CD8-positive, alpha-beta T cell (primary cell): ENCODE measurements at regions of chr7 and their contacts with region 1.

Region 1: DNA sequence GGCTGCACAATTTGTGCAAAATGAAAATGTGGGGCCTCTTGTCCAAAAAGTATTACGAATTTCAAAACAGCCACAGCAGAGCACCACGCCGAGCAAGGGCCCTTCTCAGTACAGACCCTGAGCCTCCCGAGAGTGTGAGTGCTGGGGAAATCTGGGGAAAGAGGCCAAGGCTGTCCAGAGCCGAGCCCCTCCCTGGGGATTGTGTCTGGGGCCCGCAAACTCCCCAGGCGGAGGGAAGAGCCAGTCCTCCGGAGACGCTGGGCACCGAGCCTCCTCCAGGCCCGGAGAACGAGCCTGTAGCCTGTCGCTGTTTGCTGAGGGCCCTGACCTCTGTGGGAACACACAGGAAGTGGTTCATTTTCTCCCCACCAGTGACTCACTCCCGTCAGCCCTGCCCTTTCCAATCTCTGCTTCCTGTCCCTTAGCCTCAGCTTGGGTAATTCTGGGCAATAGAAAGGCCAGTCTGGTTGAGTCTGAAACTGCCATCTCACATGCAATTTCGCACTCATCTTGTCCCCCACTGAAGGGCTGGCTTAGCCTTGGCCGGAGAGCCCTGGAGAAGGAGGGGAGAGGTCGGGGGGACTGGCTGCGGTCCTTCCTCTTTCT is 19.5 kb upstream of the GNA12 start:
- DNase-seq: peak; percentile 21 to 89 (median 66)
- ATAC-seq: peak; percentile 74
- H3K4me3 ChIP-seq: peak overlapping the region in 1 of 2 experiments; percentile 32
- H3K4me3 Mint-ChIP-seq: peak overlapping the region; percentile 64
- H3K27ac ChIP-seq: peak overlapping the region in 1 of 2 experiments; percentile 70
- H3K27ac Mint-ChIP-seq: peak overlapping the region; percentile 96
- H3K4me1 ChIP-seq: peaks cover 26% of the 10 kb centered on the region
- H3K4me1 Mint-ChIP-seq: peaks cover 27% of the 10 kb centered on the region
- H3K27me3 ChIP-seq: peaks cover 0 to 3% of the 10 kb centered on the region in 2 experiments
- H3K27me3 Mint-ChIP-seq: no peaks in the 10 kb centered on the region
- CTCF ChIP-seq: no peak

Region 2: GRCh38 chr7:2850066-2850825 is 13.3 kb before region 1 on chr7:
- CTCF ChIA-PET with region 1: interaction called, 17 read pairs
- POLR2A ChIA-PET with region 1: no interaction called
- intact Hi-C with region 1: loop called in 1 of 2 experiments (anchors 2 kb)
- DNase-seq: peak in 2 of 9 experiments; percentile 20 to 46
- ATAC-seq: no peak
- H3K4me3 ChIP-seq: no peak overlapping the region
- H3K4me3 Mint-ChIP-seq: no peak overlapping the region
- H3K27ac ChIP-seq: no peak overlapping the region
- H3K27ac Mint-ChIP-seq: no peak overlapping the region
- H3K4me1 ChIP-seq: peaks cover 7% of the 10 kb centered on the region
- H3K4me1 Mint-ChIP-seq: peaks cover 10% of the 10 kb centered on the region
- H3K27me3 ChIP-seq: no peaks in the 10 kb centered on the region
- H3K27me3 Mint-ChIP-seq: no peaks in the 10 kb centered on the region
- CTCF ChIP-seq: no peak

Region 3: DNA sequence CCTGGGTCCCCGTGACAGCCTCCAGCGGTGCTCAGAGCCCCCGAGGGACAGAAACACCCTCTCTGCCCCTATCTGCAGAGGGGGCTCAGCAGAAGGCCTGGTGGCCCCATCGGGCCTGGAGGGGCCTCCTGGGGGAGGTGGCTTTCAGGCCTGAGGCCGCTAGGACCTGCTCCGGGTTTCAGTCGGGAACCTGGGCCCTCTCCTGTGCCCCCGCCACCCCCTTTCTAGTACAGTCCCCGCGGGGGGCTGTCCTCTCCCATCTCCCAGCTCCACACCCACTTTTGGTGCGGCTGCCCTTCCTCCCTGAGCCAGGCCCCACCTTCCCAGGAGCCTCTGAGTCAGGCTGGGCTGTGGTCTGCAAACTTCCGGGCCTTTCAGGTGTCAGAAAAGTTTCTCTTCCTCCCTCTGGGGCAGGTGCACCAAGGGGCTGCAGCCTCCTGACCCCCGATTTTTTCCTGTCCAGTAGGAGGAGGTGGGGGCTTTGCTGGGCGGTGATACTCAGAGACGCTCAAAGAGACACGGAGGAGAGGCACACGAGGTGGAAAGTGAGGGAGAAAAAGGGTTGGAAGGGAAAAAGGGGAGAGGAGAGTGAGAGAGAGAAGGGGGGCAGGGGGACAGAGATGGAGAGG is 179.4 kb after region 1 on chr7:
- CTCF ChIA-PET with region 1: no interaction called
- POLR2A ChIA-PET with region 1: no interaction called
- intact Hi-C with region 1: loop called in 1 of 2 experiments (anchors 5 kb)
- DNase-seq: peak; percentile 20 to 82 (median 73)
- ATAC-seq: peak; percentile 61
- H3K4me3 ChIP-seq: peak overlapping the region; percentile 84 to 96
- H3K4me3 Mint-ChIP-seq: peak overlapping the region; percentile 92
- H3K27ac ChIP-seq: peak overlapping the region; percentile 84 to 88
- H3K27ac Mint-ChIP-seq: peak overlapping the region; percentile 94
- H3K4me1 ChIP-seq: peaks cover 49% of the 10 kb centered on the region
- H3K4me1 Mint-ChIP-seq: peaks cover 59% of the 10 kb centered on the region
- H3K27me3 ChIP-seq: no peaks in the 10 kb centered on the region
- H3K27me3 Mint-ChIP-seq: no peaks in the 10 kb centered on the region
- CTCF ChIP-seq: no peak

Region 4: GRCh38 chr7:3154912-3155494 is 291.4 kb after region 1 on chr7:
- CTCF ChIA-PET with region 1: interaction called, 50 read pairs
- POLR2A ChIA-PET with region 1: no interaction called
- intact Hi-C with region 1: loop called (anchors 1 kb)
- DNase-seq: peak; percentile 27 to 79 (median 66)
- ATAC-seq: peak; percentile 89
- H3K4me3 ChIP-seq: no peak overlapping the region
- H3K4me3 Mint-ChIP-seq: no peak overlapping the region
- H3K27ac ChIP-seq: no peak overlapping the region
- H3K27ac Mint-ChIP-seq: no peak overlapping the region
- H3K4me1 ChIP-seq: peaks cover 12% of the 10 kb centered on the region
- H3K4me1 Mint-ChIP-seq: peaks cover 13% of the 10 kb centered on the region
- H3K27me3 ChIP-seq: no peaks in the 10 kb centered on the region
- H3K27me3 Mint-ChIP-seq: no peaks in the 10 kb centered on the region
- CTCF ChIP-seq: peak; percentile 89

Region 5: DNA sequence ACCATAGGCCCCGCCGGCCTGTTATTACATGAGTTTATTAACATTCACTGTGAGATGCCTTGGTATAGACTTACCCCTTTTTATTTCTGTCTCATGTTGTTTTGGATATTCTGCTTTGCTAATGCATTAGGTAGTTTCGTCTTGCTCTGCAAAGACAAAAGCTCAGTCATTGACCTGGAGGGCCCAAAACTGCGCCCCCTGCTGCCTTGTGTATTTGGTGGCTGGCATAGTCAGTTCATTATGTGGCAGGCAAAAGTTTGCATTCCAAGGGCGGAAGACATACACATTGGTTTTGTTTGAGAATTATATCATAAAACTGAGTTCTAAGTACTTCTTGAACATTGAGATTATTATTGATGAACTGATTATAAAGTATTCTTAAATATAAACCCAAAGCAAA is 810.0 kb after region 1 on chr7:
- CTCF ChIA-PET with region 1: interaction called, 10 read pairs
- POLR2A ChIA-PET with region 1: no interaction called
- intact Hi-C with region 1: loop called in 1 of 2 experiments (anchors 5 kb)
- DNase-seq: peak in 8 of 9 experiments; percentile 21 to 66 (median 52)
- ATAC-seq: no peak
- H3K4me3 ChIP-seq: no peak overlapping the region
- H3K4me3 Mint-ChIP-seq: no peak overlapping the region
- H3K27ac ChIP-seq: no peak overlapping the region
- H3K27ac Mint-ChIP-seq: no peak overlapping the region
- H3K4me1 ChIP-seq: peaks cover 15% of the 10 kb centered on the region
- H3K4me1 Mint-ChIP-seq: peaks cover 2% of the 10 kb centered on the region
- H3K27me3 ChIP-seq: no peaks in the 10 kb centered on the region
- H3K27me3 Mint-ChIP-seq: peaks cover 4% of the 10 kb centered on the region
- CTCF ChIP-seq: no peak

Region 6: GRCh38 chr7:4610768-4611467 is 1747.4 kb after region 1 on chr7:
- CTCF ChIA-PET with region 1: no interaction called
- POLR2A ChIA-PET with region 1: no interaction called
- intact Hi-C with region 1: no loop called
- DNase-seq: peak; percentile 12 to 80 (median 59)
- ATAC-seq: peak; percentile 91
- H3K4me3 ChIP-seq: no peak overlapping the region
- H3K4me3 Mint-ChIP-seq: no peak overlapping the region
- H3K27ac ChIP-seq: no peak overlapping the region
- H3K27ac Mint-ChIP-seq: no peak overlapping the region
- H3K4me1 ChIP-seq: no peaks in the 10 kb centered on the region
- H3K4me1 Mint-ChIP-seq: peaks cover 8% of the 10 kb centered on the region
- H3K27me3 ChIP-seq: no peaks in the 10 kb centered on the region
- H3K27me3 Mint-ChIP-seq: peaks cover 6% of the 10 kb centered on the region
- CTCF ChIP-seq: peak; percentile 70